ENCODE measurements at regions of chr7 and their contacts with region 1.

Region 1: DNA sequence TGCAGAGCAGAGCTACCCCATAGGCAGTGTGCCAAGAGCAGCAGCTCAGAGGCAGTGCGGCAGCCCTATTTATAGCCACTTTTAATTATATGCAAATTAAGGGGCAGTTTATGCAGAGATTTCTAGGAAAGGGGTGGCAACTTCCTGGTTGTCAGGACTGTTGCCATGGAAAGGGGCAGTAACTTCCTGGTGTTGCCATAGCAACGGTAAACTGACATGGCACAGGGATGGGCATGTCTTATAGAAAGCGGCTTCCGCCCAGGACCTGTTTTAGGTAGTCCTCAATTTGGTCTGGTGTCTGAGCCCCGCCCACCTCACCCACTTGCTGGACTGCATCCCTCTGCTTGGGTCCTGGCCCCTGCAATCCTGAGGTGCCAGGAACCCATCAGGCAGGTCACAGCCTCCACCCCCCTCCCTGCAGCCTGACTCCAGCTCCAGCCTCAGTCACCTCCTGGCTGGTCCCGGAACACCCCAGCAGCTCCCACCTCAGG is 115.8 kb downstream of the TMEM130 start:
- DNase-seq: no peak
- ATAC-seq: no peak

Region 2: GRCh38 chr7:98701372-98701771 is 52.7 kb before region 1 on chr7:
- intact Hi-C with region 1: loop called (anchors 2 kb)
- DNase-seq: no peak
- ATAC-seq: no peak

Region 3: DNA sequence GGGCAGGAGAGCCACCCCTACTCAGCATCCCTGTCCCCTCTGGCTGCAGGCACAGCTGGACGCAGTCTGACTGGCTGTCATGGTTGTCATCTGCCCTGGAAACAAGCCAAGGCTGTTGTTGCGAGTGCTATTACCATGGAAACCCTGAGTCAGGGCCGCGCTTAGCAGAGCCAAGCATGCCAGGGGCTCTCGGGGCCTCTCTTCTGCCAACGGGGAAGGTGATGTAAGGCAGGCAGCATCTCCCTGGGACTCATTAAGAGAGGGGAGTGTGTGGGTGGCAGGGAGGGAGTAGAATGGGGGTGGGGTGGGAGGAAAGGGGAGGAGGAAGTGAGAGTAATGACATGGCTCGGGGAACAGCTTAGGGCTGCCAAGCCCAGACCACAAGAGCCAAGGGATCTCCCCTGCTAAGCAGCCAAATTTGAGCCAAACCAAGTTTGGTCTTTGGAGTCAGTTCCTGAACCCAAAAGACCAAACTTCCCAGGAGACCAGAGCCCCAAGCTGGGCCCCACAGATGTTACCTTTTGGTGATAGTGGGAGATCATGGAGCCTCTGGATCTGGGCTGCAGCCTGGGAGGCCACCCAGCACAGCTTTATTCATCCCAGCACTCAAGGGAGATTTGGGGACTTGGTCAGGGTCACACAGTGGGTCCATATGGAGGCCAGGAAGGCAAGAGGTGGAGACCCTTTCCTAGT is 48.2 kb after region 1 on chr7:
- intact Hi-C with region 1: no loop called
- DNase-seq: no peak
- ATAC-seq: peak; percentile 63

Region 4: GRCh38 chr7:98831641-98832221 is 77.7 kb after region 1 on chr7:
- intact Hi-C with region 1: no loop called
- DNase-seq: no peak
- ATAC-seq: no peak

Region 5: GRCh38 chr7:99267841-99268576 is 514.0 kb after region 1 on chr7:
- intact Hi-C with region 1: no loop called
- DNase-seq: no peak
- ATAC-seq: no peak

Measured in Right ventricle myocardium inferior (tissue), 1 donor.